ENCODE measurements at regions of chr2 and their contacts with region 1.

Region 1: DNA sequence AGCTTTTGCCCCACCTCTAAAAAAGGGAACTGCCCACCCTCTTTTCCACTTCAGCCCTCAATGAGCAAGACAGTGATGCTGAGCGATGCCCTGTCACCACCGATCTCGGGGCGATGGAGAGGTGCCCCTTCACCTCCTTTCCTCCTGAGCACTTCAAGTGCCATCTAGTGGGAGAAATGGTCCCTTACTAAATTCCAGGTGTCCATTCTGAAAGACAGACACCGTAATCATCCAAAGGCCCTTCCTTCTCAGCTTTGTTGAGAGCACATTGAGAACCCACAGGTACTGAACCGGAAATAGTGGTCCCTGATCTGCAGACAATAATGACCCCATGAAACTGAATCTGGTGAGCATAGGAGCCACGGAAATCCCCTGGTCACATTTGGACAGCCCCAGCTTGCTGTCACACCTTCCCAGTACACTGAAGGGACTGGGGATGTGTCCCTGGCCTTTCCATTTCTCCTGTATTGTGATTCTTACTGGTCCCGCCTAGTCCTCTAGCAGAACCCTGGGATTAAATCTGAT is 38.5 kb downstream of the KCTD18 start:
- DNase-seq: peak in 5 of 9 experiments; percentile 27 to 71 (median 28)
- ATAC-seq: peak; percentile 37
- H3K4me3 ChIP-seq: no peak overlapping the region
- H3K4me3 Mint-ChIP-seq: no peak overlapping the region
- H3K27ac ChIP-seq: no peak overlapping the region
- H3K27ac Mint-ChIP-seq: no peak overlapping the region
- H3K4me1 ChIP-seq: peaks cover 27% of the 10 kb centered on the region
- H3K4me1 Mint-ChIP-seq: peaks cover 32% of the 10 kb centered on the region
- H3K27me3 ChIP-seq: no peaks in the 10 kb centered on the region
- H3K27me3 Mint-ChIP-seq: no peaks in the 10 kb centered on the region
- CTCF ChIP-seq: peak; percentile 61

Region 2: DNA sequence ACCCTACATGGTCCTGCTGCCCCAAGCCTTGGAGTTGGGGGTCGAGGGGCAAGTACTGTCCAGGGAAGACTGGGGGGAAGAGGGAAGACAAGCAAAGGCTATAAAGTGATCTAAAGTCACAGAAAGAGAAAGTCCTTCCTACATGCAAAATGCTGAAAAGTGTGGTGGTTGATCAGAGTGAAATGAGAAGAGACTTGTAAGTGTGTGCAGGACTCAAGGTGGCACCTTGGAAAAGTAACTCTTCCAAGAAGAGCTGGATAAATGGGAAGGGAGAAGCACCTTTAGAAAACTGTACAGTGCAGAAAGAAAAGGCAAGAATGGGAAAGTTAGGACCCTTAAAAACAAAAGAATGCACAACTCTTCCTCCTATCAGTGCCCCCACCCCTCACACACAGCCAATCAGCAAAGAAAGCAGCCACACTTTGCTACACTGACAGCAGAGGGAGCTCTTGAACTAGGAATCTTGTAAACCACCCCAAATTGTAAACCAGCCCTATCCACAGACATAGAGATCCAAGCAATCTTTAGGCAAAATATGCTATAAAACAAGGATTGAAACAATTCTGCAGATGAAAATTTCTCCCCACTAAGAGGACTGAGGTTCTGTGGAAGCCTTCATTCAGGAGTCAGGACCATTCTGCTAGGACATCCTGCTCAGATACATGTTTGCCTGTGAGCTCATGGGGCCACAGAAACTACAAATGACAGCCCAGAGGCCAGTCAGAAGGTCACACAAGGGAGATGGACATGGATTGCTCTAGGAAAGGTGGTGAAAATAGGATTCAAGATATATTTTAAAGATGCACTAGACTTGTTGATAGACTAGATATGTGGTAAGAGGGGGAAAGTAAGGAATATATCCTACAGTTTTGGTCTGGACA is 766.8 kb before region 1 on chr2:
- CTCF ChIA-PET with region 1: no interaction called
- POLR2A ChIA-PET with region 1: no interaction called
- intact Hi-C with region 1: loop called in 1 of 2 experiments (anchors 10 kb)
- DNase-seq: peak in 2 of 9 experiments; percentile 26 to 33
- ATAC-seq: no peak
- H3K4me3 ChIP-seq: no peak overlapping the region
- H3K4me3 Mint-ChIP-seq: no peak overlapping the region
- H3K27ac ChIP-seq: no peak overlapping the region
- H3K27ac Mint-ChIP-seq: no peak overlapping the region
- H3K4me1 ChIP-seq: no peaks in the 10 kb centered on the region
- H3K4me1 Mint-ChIP-seq: no peaks in the 10 kb centered on the region
- H3K27me3 ChIP-seq: no peaks in the 10 kb centered on the region
- H3K27me3 Mint-ChIP-seq: peaks cover 4% of the 10 kb centered on the region
- CTCF ChIP-seq: no peak

Region 3: DNA sequence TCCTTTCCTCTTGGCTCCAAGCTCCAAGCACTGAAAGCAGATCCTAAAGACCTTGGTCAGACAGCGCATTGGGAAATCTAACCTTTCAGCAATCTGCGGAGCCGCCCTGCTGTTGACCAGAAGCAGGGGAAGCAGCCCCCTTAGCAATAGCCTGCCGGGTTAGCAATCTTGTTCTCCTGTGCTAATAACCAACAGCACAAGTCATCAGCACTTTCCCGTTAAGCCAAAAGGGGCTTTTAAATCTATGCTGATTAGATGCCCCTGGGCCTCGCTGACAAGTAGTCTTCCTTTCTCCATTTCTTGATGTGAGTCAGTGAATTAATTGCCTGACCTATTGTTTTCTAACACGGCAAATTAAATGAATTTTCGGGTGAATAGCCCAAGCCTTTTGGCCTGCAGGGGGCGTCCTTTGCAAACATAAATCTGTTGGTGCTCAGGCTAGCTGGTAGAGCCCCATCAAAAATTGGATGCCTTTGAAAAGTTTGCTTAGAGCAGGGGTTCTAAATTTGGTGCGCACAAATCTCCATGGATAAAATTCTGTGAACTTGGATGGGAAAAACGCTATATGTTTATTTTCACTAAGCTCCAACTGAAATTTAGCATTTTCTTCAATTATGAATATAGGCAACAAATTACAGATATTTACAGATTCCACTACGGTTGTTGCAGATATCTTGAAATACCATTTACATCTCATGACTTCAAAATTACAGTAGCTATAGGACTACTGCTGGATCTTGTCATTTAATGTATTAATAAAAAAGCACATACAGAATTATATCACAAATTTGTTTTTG is 491.4 kb before region 1 on chr2:
- CTCF ChIA-PET with region 1: interaction called, 28 read pairs
- POLR2A ChIA-PET with region 1: no interaction called
- intact Hi-C with region 1: loop called (anchors 1 kb)
- DNase-seq: peak; percentile 69 to 90 (median 78)
- ATAC-seq: peak; percentile 75
- H3K4me3 ChIP-seq: no peak overlapping the region
- H3K4me3 Mint-ChIP-seq: no peak overlapping the region
- H3K27ac ChIP-seq: no peak overlapping the region
- H3K27ac Mint-ChIP-seq: no peak overlapping the region
- H3K4me1 ChIP-seq: no peaks in the 10 kb centered on the region
- H3K4me1 Mint-ChIP-seq: peaks cover 2% of the 10 kb centered on the region
- H3K27me3 ChIP-seq: no peaks in the 10 kb centered on the region
- H3K27me3 Mint-ChIP-seq: no peaks in the 10 kb centered on the region
- CTCF ChIP-seq: peak; percentile 77

Region 4: GRCh38 chr2:199985625-199986207 is 485.7 kb before region 1 on chr2:
- CTCF ChIA-PET with region 1: interaction called, 28 read pairs
- POLR2A ChIA-PET with region 1: no interaction called
- intact Hi-C with region 1: loop called (anchors 1 kb)
- DNase-seq: peak in 7 of 9 experiments; percentile 14 to 65 (median 35)
- ATAC-seq: peak; percentile 72
- H3K4me3 ChIP-seq: no peak overlapping the region
- H3K4me3 Mint-ChIP-seq: no peak overlapping the region
- H3K27ac ChIP-seq: no peak overlapping the region
- H3K27ac Mint-ChIP-seq: no peak overlapping the region
- H3K4me1 ChIP-seq: no peaks in the 10 kb centered on the region
- H3K4me1 Mint-ChIP-seq: peaks cover 5% of the 10 kb centered on the region
- H3K27me3 ChIP-seq: no peaks in the 10 kb centered on the region
- H3K27me3 Mint-ChIP-seq: no peaks in the 10 kb centered on the region
- CTCF ChIP-seq: peak; percentile 45

Region 5: DNA sequence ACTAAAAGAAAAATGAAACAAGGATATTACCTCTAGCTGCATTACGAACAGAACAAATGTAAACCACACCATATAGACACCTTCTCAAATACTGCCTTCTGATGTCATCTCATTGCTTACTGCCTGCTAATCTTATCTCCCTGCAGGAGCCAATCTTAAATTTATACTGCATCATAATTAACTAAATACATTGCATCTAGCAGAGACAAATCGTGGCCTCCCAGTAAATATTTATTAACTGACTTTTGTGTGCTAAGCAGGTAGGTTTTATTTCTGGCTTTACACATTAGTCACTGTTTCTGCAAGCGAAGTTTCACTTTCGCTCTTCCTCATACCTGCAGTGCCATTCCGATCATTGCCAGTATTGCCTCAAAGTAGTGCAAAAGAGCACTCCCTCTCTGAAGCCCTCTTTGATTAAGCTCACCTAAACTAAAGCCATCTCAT is 97.4 kb before region 1 on chr2:
- CTCF ChIA-PET with region 1: interaction called, 12 read pairs
- POLR2A ChIA-PET with region 1: interaction called, 8 read pairs
- intact Hi-C with region 1: loop called in 1 of 2 experiments (anchors 5 kb)
- DNase-seq: peak in 7 of 9 experiments; percentile 4 to 79 (median 25)
- ATAC-seq: peak; percentile 92
- H3K4me3 ChIP-seq: peak overlapping the region; percentile 51 to 69
- H3K4me3 Mint-ChIP-seq: peak overlapping the region; percentile 87
- H3K27ac ChIP-seq: peak overlapping the region; percentile 40 to 52
- H3K27ac Mint-ChIP-seq: peak overlapping the region; percentile 90
- H3K4me1 ChIP-seq: peaks cover 23% of the 10 kb centered on the region
- H3K4me1 Mint-ChIP-seq: peaks cover 44% of the 10 kb centered on the region
- H3K27me3 ChIP-seq: no peaks in the 10 kb centered on the region
- H3K27me3 Mint-ChIP-seq: no peaks in the 10 kb centered on the region
- CTCF ChIP-seq: no peak

Region 6: GRCh38 chr2:200483729-200484198 is 12.4 kb after region 1 on chr2:
- CTCF ChIA-PET with region 1: interaction called, 59 read pairs
- POLR2A ChIA-PET with region 1: no interaction called
- intact Hi-C with region 1: no loop called
- DNase-seq: no peak
- ATAC-seq: no peak
- H3K4me3 ChIP-seq: no peak overlapping the region
- H3K4me3 Mint-ChIP-seq: no peak overlapping the region
- H3K27ac ChIP-seq: no peak overlapping the region
- H3K27ac Mint-ChIP-seq: no peak overlapping the region
- H3K4me1 ChIP-seq: no peaks in the 10 kb centered on the region
- H3K4me1 Mint-ChIP-seq: peaks cover 3% of the 10 kb centered on the region
- H3K27me3 ChIP-seq: no peaks in the 10 kb centered on the region
- H3K27me3 Mint-ChIP-seq: peaks cover 5% of the 10 kb centered on the region
- CTCF ChIP-seq: no peak

Region 7: GRCh38 chr2:201118961-201119854 is 647.8 kb after region 1 on chr2:
- CTCF ChIA-PET with region 1: no interaction called
- POLR2A ChIA-PET with region 1: no interaction called
- intact Hi-C with region 1: no loop called
- DNase-seq: peak in 4 of 9 experiments; percentile 44 to 67 (median 49)
- ATAC-seq: no peak
- H3K4me3 ChIP-seq: peak overlapping the region; percentile 82 to 95
- H3K4me3 Mint-ChIP-seq: peak overlapping the region; percentile 99
- H3K27ac ChIP-seq: peak overlapping the region; percentile 92
- H3K27ac Mint-ChIP-seq: peak overlapping the region; percentile 100
- H3K4me1 ChIP-seq: peaks cover 55% of the 10 kb centered on the region
- H3K4me1 Mint-ChIP-seq: peaks cover 71% of the 10 kb centered on the region
- H3K27me3 ChIP-seq: no peaks in the 10 kb centered on the region
- H3K27me3 Mint-ChIP-seq: no peaks in the 10 kb centered on the region
- CTCF ChIP-seq: no peak

Region 8: GRCh38 chr2:202009019-202009481 is 1537.7 kb after region 1 on chr2:
- CTCF ChIA-PET with region 1: no interaction called
- POLR2A ChIA-PET with region 1: no interaction called
- intact Hi-C with region 1: no loop called
- DNase-seq: no peak
- ATAC-seq: no peak
- H3K4me3 ChIP-seq: no peak overlapping the region
- H3K4me3 Mint-ChIP-seq: no peak overlapping the region
- H3K27ac ChIP-seq: no peak overlapping the region
- H3K27ac Mint-ChIP-seq: no peak overlapping the region
- H3K4me1 ChIP-seq: no peaks in the 10 kb centered on the region
- H3K4me1 Mint-ChIP-seq: no peaks in the 10 kb centered on the region
- H3K27me3 ChIP-seq: no peaks in the 10 kb centered on the region
- H3K27me3 Mint-ChIP-seq: peaks cover 30% of the 10 kb centered on the region
- CTCF ChIP-seq: no peak

Measured in CD8-positive, alpha-beta T cell (primary cell).